ENCODE measurements at regions of chr13 and their contacts with region 1.

Region 1: GRCh38 chr13:79405829-79406596 is at the start of gene RBM26:
- DNase-seq: peak; percentile 90
- H3K4me3 Mint-ChIP-seq: peak within 1 kb of the TSS; percentile 92
- H3K27ac Mint-ChIP-seq: peak within 1 kb of the TSS; percentile 97
- H3K4me1 Mint-ChIP-seq: peaks cover 24% of the 10 kb centered on the region
- H3K27me3 Mint-ChIP-seq: no peaks in the 10 kb centered on the region
- total RNA-seq, gene RBM26: 99.3 and 107 TPM in 2 replicates

Region 2: DNA sequence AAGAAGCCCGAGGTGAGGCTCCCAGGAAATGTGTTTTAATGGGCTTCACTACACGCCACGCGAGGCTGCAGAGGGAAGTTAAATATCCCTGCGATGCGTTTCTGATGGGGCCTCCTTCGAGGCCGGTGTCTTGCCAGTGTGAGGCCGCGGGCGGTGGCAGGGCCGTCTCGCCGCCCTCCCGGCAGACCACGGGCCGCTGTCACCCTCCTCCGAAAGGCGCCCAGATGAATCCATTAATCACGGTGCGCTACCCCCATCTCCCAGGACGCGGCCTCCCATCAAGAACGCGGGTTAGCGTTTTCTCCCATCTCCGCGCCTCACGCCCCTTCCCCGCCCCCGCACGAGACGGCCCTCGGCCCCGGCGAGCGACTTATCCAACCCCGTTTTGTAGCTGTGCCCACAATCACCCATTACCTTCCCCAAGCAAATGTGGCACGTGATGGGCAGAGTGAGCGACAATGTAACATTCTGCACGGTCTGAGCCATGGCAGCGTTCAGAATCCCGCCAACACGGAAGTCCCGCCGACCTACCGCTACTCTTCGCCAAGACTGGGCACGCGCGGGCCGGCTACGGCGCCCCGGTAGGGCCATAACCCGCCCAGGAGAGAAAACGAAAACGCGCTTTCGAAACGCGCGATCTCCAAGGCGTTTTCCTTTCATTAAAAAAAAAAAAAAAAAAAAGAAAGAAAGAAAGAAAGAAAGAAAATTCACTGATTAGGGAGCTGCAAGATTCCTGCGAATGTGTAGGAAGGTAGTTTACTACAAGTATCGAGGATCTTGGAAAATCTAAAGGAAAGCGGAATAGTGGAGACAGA is 747.2 kb before region 1 on chr13 and contains the start of gene OBI1:
- intact Hi-C with region 1: loop called (anchors 5 kb)
- DNase-seq: peak; percentile 84
- H3K4me3 Mint-ChIP-seq: peak within 1 kb of the TSS; percentile 96
- H3K27ac Mint-ChIP-seq: peak within 1 kb of the TSS; percentile 97
- H3K4me1 Mint-ChIP-seq: peaks cover 36% of the 10 kb centered on the region
- H3K27me3 Mint-ChIP-seq: no peaks in the 10 kb centered on the region
- total RNA-seq, gene OBI1: 20.0 and 21.1 TPM in 2 replicates

Region 3: GRCh38 chr13:79194272-79194671 is 211.7 kb before region 1 on chr13:
- intact Hi-C with region 1: loop called (anchors 1 kb)
- DNase-seq: peak; percentile 62
- H3K4me3 Mint-ChIP-seq: peak overlapping the region; percentile 60
- H3K27ac Mint-ChIP-seq: peak overlapping the region; percentile 22
- H3K4me1 Mint-ChIP-seq: peaks cover 56% of the 10 kb centered on the region
- H3K27me3 Mint-ChIP-seq: no peaks in the 10 kb centered on the region

Region 4: DNA sequence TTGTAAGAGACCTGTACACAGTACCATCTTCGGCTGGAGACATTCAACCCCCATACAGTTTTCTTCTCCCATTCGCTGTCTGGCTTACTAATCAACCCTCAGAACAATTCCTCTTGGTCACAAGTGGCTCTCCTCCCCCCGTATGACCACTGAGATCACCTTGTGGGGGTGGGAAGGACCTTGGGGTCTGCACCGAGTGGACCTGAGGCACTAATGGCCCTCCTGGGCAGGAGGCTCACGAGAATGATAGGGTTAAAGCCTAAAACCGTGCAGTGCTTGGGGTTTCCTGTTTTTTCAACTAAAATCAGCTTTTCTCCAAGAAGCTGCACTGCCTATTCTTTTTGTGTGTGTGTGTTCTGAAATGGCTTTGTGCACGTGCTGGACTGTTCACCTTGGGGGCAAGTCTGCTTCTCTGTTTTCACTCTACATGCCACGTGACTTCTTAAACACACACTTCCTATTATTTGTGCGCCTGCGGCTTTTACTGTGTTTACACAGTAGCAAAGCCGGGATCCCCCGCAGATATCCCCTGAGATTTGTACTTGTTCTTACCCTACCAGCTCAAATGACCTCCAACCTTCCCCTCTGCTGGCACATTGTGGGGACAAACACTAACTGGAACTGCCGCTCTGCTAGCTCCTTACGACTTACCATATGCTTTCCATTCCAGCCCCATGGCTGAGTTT is 12.3 kb before region 1 on chr13:
- intact Hi-C with region 1: loop called (anchors 1 kb)
- DNase-seq: no peak
- H3K4me3 Mint-ChIP-seq: peak overlapping the region; percentile 64
- H3K27ac Mint-ChIP-seq: peak overlapping the region; percentile 60
- H3K4me1 Mint-ChIP-seq: peaks cover 62% of the 10 kb centered on the region
- H3K27me3 Mint-ChIP-seq: no peaks in the 10 kb centered on the region

Region 5: DNA sequence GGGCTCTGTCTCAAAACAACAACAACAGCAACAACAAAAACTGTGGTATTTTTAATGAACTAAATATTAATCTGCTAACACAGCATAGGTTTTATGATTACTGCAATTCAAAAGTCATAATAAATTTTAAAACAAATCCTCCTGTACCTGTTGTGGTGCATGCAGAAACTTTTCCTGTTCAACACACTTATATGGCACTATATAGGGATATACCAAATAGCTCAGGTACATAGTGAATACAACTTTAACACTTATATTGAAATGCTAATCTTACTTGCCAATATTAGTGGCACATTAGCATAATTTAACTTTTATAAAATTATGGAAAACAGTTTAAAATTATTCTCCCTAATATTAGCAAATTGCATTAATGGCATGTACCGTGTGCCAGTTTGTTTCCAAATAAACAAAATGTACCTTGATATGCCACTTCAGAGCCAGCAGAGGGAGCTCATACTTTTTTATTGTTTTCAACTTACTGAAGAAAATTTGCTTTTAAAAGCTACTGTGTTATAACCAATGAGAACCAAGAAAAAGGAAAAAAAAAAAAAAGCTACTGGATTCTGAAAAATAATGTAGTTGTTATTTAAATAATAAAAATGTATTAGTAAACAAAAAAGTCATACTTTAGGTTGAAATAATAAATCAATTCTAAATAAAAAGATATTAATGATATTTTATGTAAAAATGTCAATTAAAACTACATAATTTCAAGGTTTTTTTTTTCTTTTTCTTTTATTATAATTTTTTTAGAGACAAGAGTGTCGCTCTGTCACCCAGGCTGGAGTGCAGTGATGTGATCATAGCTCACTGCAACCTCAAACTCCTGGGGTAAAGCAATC is 18.0 kb after region 1 on chr13:
- intact Hi-C with region 1: loop called (anchors 1 kb)
- DNase-seq: no peak
- H3K4me3 Mint-ChIP-seq: no peak overlapping the region
- H3K27ac Mint-ChIP-seq: no peak overlapping the region
- H3K4me1 Mint-ChIP-seq: peaks cover 35% of the 10 kb centered on the region
- H3K27me3 Mint-ChIP-seq: no peaks in the 10 kb centered on the region

Region 6: GRCh38 chr13:79541426-79542049 is 135.5 kb after region 1 on chr13:
- intact Hi-C with region 1: loop called (anchors 1 kb)
- DNase-seq: no peak
- H3K4me3 Mint-ChIP-seq: no peak overlapping the region
- H3K27ac Mint-ChIP-seq: no peak overlapping the region
- H3K4me1 Mint-ChIP-seq: peaks cover 34% of the 10 kb centered on the region
- H3K27me3 Mint-ChIP-seq: no peaks in the 10 kb centered on the region

Region 7: DNA sequence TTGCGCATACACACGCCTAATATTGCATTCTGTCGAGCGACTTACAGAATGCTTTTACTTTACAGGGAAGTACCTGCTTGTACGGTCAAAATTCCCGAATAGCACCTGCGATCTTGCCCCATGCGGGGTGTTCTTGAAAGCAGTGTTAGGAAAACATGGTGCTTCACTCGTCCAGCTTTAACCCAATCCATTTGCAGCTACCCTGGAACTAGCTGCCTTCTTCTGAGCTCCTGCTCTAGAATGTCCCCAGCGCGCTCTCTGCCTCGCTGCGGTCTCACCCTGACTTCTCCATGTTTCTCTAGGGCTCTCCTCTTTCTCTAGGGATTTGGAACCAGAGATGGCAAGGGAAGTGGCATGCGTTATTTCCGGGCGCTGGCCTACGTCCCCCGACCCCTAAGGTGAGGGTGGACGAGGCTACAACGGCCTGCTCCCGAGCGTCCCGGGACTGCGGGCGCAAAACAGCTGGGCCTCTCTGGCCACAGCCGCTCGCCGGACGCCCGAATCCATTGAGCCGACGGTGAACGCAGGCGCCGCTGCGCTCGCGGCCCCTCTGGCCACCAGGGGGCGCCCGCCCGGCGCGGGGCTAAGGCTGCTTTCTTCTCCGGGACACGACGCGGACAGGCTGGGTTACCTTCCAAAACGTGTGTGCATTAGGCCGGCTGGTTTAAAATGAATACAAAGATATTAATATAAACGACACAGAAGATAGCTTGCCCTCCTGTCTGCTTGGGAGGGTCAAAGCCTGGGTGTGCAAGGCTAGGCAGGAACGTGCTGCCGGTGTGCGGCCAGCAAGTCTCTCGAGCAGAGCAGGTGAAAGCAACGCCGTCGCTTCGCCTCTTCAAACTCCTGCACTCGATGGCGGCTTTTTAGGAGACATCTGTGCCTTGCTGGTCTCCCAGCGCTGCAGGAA is 936.7 kb after region 1 on chr13:
- intact Hi-C with region 1: loop called (anchors 10 kb)
- DNase-seq: peak; percentile 56
- H3K4me3 Mint-ChIP-seq: peak overlapping the region; percentile 17
- H3K27ac Mint-ChIP-seq: no peak overlapping the region
- H3K4me1 Mint-ChIP-seq: peaks cover 18% of the 10 kb centered on the region
- H3K27me3 Mint-ChIP-seq: peaks cover 45% of the 10 kb centered on the region